ENCODE measurements at regions of chr1 and their contacts with region 1.

Region 1: DNA sequence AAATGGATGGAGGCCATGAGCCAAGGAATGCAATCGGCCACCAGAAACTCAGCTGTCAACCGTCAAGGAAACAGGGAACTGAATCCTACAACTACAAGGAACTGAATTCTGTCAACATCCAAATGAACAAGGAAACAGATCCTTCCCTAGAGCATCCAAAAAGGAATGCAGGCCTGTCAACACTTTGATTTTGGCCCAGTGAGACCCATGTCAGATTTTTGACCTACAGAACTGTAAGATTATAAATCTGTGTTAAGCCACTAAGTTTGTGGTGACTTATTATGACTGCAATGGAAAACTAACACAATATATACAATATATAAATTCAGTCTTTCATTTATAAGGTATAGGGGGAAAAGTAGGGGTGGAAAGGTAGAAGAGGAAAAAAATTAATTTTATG is 55.3 kb downstream of the SHCBP1L start:
- DNase-seq: no peak
- H3K4me3 ChIP-seq: no peak overlapping the region
- H3K27ac ChIP-seq: no peak overlapping the region
- H3K4me1 ChIP-seq: peaks cover 13% of the 10 kb centered on the region
- H3K27me3 ChIP-seq: no peaks in the 10 kb centered on the region
- CTCF ChIP-seq: no peak

Region 2: DNA sequence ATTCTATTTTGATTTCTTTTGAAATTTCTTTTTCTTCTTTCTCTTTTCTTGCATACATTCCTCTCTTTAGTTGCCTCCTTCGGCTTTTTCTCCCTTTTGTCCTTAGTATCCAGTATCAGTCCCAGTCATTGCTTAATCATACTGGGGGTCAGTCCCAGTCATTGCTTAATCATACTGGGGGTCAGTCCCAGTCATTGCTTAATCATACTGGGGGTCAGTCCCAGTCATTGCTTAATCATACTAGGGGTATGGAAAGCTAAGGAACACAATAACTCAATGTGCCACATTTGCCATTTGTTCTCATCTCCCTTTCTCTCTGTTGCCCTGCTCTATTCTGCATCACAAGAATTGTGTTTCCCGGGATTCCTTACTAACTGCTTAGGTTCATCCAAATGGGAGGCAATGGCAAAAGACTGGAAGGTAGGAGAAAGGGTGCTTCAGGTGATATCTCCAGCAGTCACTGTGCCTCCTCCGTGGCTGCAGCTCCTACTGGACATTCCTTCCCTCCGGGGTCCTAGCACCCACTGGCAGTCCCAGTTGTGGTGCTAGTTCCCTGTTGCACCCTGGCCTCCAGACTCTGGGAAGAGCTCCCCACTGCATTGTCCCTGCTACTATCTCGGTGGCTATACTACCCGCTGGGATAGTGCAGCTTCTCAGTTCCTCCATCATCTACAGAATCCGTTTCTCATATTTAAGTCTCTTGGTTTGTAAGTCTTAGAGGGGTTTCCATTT is 92.9 kb after region 1 on chr1:
- CTCF ChIA-PET with region 1: no interaction called
- POLR2A ChIA-PET with region 1: interaction called, 14 read pairs
- intact Hi-C with region 1: no loop called
- DNase-seq: no peak
- H3K4me3 ChIP-seq: no peak overlapping the region
- H3K27ac ChIP-seq: no peak overlapping the region
- H3K4me1 ChIP-seq: peaks cover 10% of the 10 kb centered on the region; the same call in 1 of the 2 replicates
- H3K27me3 ChIP-seq: no peaks in the 10 kb centered on the region
- CTCF ChIP-seq: no peak

Region 3: GRCh38 chr1:183023601-183024316 is 126.1 kb after region 1 on chr1:
- CTCF ChIA-PET with region 1: no interaction called
- POLR2A ChIA-PET with region 1: no interaction called
- intact Hi-C with region 1: no loop called
- DNase-seq: peak; percentile 81 to 87
- H3K4me3 ChIP-seq: peak overlapping the region; percentile 82
- H3K27ac ChIP-seq: peak overlapping the region; percentile 77
- H3K4me1 ChIP-seq: peaks cover 61% of the 10 kb centered on the region
- H3K27me3 ChIP-seq: no peaks in the 10 kb centered on the region
- CTCF ChIP-seq: peak; percentile 65

Measured in PC-9 (cell line).